ENCODE measurements at regions of chr1 and their contacts with region 1.

Region 1: GRCh38 chr1:19163261-19163660 is 46.8 kb downstream of the UBR4 start:
- DNase-seq: no peak

Region 2: DNA sequence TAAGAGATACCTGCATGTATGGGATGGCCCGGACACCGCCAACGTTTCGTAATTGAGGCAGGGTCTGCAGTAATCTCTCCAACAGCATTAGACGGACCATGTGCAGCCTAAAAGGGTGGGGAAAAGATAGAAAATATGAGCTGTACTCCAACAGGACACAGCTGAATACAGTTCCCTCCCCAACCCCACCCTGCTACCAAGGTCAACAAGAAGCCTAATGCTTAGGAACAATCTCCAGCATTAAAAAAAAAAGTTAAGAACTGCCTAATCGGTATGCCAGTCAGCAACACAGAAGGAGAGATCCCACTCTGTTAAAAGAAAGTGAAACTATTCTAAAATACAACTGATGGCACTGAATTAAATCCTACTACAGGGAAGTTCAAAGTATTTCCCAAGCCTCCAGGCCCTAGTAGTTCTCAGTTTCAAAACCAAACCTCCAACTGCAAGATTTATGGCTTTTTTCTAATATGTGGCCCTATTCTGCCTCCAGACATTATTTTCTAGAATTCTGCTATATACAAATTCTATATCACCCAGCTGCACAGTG is 34.2 kb before region 1 on chr1:
- intact Hi-C with region 1: no loop called
- DNase-seq: no peak

Region 3: DNA sequence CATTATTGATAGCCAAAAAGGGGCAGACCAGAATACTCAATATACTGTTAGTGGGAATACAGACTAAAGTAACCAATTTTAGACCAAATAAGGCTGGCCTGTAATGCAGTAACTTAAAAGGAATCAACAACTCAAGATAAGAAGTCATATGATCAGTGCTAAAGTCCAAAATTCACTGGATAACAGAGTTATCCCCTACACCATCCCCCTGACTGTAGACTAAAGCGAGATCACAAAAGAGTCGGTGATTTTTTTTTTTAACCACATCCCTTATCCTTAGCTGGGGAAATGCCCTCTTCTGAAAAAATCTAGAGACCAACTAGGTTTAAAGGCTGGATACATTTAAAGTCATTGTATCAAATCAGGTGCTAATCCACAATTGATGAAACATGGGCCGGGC is 39.1 kb after region 1 on chr1:
- intact Hi-C with region 1: loop called in 1 of 2 experiments (anchors 1 kb)
- DNase-seq: no peak